T-cell (primary cell): ENCODE measurements at regions of chr7 and their contacts with region 1.

Region 1: GRCh38 chr7:36923943-36924436 is 199.7 kb upstream of the AOAH start:
- DNase-seq: no peak
- ATAC-seq: no peak
- H3K4me3 ChIP-seq: no peak overlapping the region
- H3K4me3 Mint-ChIP-seq: no peak overlapping the region
- H3K27ac ChIP-seq: no peak overlapping the region
- H3K27ac Mint-ChIP-seq: no peak overlapping the region
- H3K4me1 ChIP-seq: no peaks in the 10 kb centered on the region
- H3K4me1 Mint-ChIP-seq: peaks cover 4 to 11% (median 6%) of the 10 kb centered on the region in 3 donors
- H3K27me3 ChIP-seq: no peaks in the 10 kb centered on the region
- H3K27me3 Mint-ChIP-seq: no peaks in the 10 kb centered on the region

Region 2: DNA sequence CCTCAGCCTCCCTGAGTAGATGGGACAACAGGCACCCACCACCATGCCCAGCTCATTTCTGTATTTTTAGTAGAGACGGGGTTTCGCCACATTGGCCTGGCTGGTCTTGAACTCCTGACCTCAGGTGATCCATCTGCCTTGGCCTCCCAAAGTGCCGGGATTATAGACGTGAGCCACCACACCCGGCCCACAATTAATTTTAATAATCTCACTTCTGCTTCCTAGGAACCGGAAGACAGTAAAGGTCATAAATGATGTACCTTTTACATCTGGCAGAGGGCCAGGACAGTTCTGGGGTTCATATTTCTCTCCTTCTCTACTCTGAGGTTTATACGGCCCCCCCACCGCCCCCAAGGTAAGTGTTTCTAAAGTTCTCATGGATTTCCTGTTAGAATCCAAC is 168.5 kb before region 1 on chr7:
- CTCF ChIA-PET with region 1: no interaction called
- POLR2A ChIA-PET with region 1: no interaction called
- DNase-seq: no peak
- ATAC-seq: no peak
- H3K4me3 ChIP-seq: no peak overlapping the region
- H3K4me3 Mint-ChIP-seq: no peak overlapping the region
- H3K27ac ChIP-seq: no peak overlapping the region
- H3K27ac Mint-ChIP-seq: no peak overlapping the region
- H3K4me1 ChIP-seq: no peaks in the 10 kb centered on the region
- H3K4me1 Mint-ChIP-seq: peaks cover 3 to 21% (median 7%) of the 10 kb centered on the region in 3 donors
- H3K27me3 ChIP-seq: no peaks in the 10 kb centered on the region
- H3K27me3 Mint-ChIP-seq: no peaks in the 10 kb centered on the region

Region 3: GRCh38 chr7:36875794-36876193 is 48.2 kb before region 1 on chr7:
- CTCF ChIA-PET with region 1: no interaction called
- POLR2A ChIA-PET with region 1: interaction called in 1 of 2 experiments, 10 read pairs
- DNase-seq: no peak
- ATAC-seq: no peak
- H3K4me3 ChIP-seq: no peak overlapping the region
- H3K4me3 Mint-ChIP-seq: no peak overlapping the region
- H3K27ac ChIP-seq: no peak overlapping the region
- H3K27ac Mint-ChIP-seq: no peak overlapping the region
- H3K4me1 ChIP-seq: peaks cover 0 to 2% of the 10 kb centered on the region in 2 experiments
- H3K4me1 Mint-ChIP-seq: peaks cover 0 to 11% (median 0%) of the 10 kb centered on the region in 3 donors
- H3K27me3 ChIP-seq: no peaks in the 10 kb centered on the region
- H3K27me3 Mint-ChIP-seq: no peaks in the 10 kb centered on the region

Region 4: GRCh38 chr7:37952240-37952639 is 1028.2 kb after region 1 on chr7:
- CTCF ChIA-PET with region 1: no interaction called
- POLR2A ChIA-PET with region 1: no interaction called
- DNase-seq: no peak
- ATAC-seq: no peak
- H3K4me3 ChIP-seq: no peak overlapping the region
- H3K4me3 Mint-ChIP-seq: no peak overlapping the region
- H3K27ac ChIP-seq: no peak overlapping the region
- H3K27ac Mint-ChIP-seq: no peak overlapping the region
- H3K4me1 ChIP-seq: peaks cover 0 to 2% of the 10 kb centered on the region in 2 experiments
- H3K4me1 Mint-ChIP-seq: peaks cover 0 to 4% (median 0%) of the 10 kb centered on the region in 3 donors
- H3K27me3 ChIP-seq: peaks cover 0 to 3% of the 10 kb centered on the region in 2 experiments
- H3K27me3 Mint-ChIP-seq: peaks cover 2 to 4% of the 10 kb centered on the region in 2 donors